ENCODE measurements at regions of chr3 and their contacts with region 1.

Region 1: DNA sequence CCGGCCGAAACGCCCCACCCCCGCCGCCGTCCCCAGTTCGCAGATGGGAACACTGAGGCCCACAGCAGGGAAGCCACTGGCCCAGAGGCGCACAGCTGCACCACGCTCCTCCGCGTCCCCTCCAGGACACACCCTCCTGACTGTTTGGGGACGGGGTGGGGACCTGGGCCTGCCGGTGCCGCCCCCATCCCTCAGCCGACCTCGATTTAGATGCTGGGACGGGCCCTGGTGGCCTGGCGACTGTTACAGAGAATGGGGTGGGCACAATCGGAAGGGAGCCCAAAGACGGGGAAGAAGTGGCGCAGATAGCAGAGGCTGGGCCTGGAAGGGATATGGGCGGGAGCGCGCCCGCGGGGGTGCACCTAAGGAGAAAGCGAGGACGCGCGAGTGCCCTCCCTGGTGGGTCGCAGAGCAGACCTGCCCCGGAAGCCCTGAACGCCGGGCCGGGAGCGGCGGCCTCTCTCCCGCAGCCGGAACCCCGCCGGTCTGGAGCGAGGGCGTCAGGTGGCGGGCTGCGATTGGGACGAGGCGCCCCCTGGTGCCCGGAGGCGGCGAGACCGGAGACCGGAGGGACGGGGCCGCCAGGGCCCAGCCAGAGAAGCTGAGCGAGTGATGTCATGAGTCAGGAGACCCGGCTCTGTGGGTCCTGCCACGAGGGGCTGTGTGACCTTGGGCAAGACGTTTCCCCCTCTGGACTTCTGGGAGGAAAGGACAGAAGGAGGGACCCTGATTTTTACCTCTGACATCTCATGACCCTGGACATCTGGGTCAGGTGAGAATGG is 78.4 kb downstream of the IQSEC1 start:
- DNase-seq: peak; percentile 71 to 94
- H3K4me3 ChIP-seq: peak overlapping the region; percentile 82 to 91
- H3K27ac ChIP-seq: peak overlapping the region; percentile 81 to 95
- H3K4me1 ChIP-seq: peaks cover 0 to 5% of the 10 kb centered on the region in 2 donors
- H3K27me3 ChIP-seq: no peaks in the 10 kb centered on the region
- CTCF ChIP-seq: peak; percentile 87 to 95 (median 89)

Region 2: DNA sequence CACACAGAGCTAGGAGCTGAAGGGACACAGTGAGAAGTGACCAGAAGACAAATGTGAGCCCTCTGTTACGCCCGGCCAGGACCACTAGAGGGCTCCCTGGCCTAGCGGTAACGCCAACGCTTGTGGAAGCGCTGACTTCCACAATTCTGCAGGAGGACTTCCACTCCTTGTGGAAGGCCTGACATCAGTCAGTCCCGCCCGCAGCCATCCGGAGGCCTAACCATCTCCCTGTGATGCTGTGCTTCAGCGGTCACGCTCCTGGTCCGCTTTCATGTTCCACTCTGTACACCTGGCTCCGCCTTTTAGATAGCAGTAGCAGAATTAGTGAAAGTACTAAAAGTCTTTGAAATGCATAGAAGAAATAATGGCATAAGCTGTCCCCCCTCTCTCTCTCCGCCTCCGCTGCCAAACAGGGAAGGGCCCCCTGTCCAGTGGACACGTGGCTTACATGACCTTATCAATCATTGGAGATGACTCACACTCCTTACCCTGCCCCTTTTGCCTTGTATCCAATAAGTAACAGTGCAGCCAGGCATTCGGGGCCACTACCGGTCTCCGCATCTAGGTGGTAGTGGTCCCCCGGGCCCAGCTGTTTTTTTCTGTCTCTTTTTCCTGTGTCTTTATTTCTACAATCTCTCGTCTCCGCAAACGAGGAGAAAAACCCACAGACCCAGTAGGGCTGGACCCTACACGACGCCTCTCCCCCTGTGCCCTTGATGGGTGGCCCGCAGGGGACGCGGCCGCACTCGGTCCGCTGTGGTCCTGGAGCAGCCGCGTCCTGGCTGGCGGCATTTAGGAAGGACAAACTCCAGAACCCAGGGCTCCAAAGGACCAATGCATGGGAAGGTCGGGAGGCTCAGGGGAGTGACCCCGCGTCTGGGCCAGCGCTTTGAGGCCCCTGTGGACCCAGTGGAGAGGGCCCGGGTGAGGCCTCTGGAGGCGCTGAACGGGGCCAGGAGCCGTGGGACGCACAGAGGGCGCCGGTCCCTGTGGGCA is 126.5 kb before region 1 on chr3:
- intact Hi-C with region 1: loop called (anchors 2 kb)
- DNase-seq: peak; percentile 53 to 94
- H3K4me3 ChIP-seq: peak overlapping the region; percentile 20 to 30
- H3K27ac ChIP-seq: no peak overlapping the region
- H3K4me1 ChIP-seq: peaks cover 3 to 15% of the 10 kb centered on the region in 2 donors
- H3K27me3 ChIP-seq: no peaks in the 10 kb centered on the region
- CTCF ChIP-seq: peak; percentile 90 to 96 (median 91)

Region 3: DNA sequence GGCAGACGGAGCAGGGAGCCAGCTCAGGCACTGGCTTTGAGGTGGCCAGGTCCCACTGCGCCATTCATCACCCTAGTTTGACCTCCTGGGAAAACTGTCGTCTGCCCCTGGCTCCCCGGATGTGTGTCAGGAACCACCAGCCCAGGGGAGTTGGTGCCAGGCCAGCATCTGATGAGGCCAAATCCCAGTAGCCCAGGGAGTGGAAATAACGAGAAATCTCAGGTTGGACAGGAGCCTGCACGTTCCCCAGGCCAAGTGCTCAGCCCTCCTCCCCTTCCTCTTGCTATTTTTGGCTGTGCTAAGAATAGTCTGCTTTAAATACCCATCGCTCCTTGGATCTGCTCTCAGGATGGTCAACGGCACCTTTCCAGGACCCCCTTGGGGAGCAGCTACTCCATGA is 60.4 kb before region 1 on chr3:
- intact Hi-C with region 1: loop called (anchors 2 kb)
- DNase-seq: peak; percentile 73 to 97
- H3K4me3 ChIP-seq: no peak overlapping the region
- H3K27ac ChIP-seq: peak overlapping the region; percentile 88 to 89
- H3K4me1 ChIP-seq: peaks cover 26 to 67% of the 10 kb centered on the region in 2 donors
- H3K27me3 ChIP-seq: no peaks in the 10 kb centered on the region
- CTCF ChIP-seq: no peak

Region 4: GRCh38 chr3:12954891-12955650 is 39.7 kb before region 1 on chr3:
- intact Hi-C with region 1: loop called (anchors 2 kb)
- DNase-seq: peak; percentile 90 to 98
- H3K4me3 ChIP-seq: peak overlapping the region; percentile 1 to 11
- H3K27ac ChIP-seq: peak overlapping the region; percentile 89 to 92
- H3K4me1 ChIP-seq: peaks cover 49 to 87% of the 10 kb centered on the region in 2 donors
- H3K27me3 ChIP-seq: no peaks in the 10 kb centered on the region
- CTCF ChIP-seq: peak in 2 of 3 experiments; percentile 4 to 23

Region 5: DNA sequence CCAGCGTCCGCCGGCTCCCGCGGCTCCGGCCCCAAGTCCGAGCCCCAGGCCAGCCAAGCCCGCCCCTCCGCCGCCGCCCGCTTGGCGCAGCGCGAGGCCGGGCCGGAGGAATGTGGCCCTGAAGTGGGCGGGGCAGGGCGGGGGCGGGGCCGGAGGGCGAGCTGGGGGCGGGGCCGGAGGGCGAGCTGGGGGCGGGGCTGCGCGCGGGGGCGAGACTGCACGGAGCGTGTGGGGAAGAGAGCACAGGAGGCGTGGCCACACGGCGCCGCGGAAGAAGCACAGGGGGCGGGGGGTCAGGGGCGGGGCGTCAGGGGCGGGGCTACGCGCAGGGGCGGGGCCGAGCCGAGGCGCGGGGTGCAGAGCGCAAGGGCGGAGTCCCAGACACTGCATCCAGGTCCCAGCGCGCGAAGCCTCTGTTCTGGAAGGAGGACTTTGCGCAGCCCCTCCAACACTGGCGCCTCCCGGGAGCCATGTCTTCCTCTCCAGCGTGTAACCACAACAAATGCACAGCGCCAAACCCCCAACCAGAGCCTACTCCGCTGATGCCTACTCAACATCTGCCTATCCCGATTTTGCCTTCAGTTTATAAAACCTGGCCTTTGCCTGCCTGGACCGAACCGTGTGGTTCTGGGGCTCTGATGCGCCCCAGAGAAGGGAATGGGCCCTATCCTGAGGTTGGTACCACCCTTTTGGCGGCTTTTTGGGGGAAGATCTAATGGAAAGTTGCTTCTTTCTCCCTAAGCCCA is 27.0 kb before region 1 on chr3:
- intact Hi-C with region 1: loop called (anchors 1 kb)
- DNase-seq: peak; percentile 63 to 93
- H3K4me3 ChIP-seq: peak overlapping the region; percentile 76 to 89
- H3K27ac ChIP-seq: peak overlapping the region; percentile 82 to 90
- H3K4me1 ChIP-seq: peaks cover 24 to 41% of the 10 kb centered on the region in 2 donors
- H3K27me3 ChIP-seq: no peaks in the 10 kb centered on the region
- CTCF ChIP-seq: no peak

Region 6: GRCh38 chr3:13022348-13023234 is 27.8 kb after region 1 on chr3:
- intact Hi-C with region 1: loop called (anchors 2 kb)
- DNase-seq: peak; percentile 75 to 93
- H3K4me3 ChIP-seq: peak overlapping the region in 1 of 2 donors; percentile 54
- H3K27ac ChIP-seq: peak overlapping the region; percentile 74 to 88
- H3K4me1 ChIP-seq: peaks cover 20 to 54% of the 10 kb centered on the region in 2 donors
- H3K27me3 ChIP-seq: no peaks in the 10 kb centered on the region
- CTCF ChIP-seq: no peak

Region 7: DNA sequence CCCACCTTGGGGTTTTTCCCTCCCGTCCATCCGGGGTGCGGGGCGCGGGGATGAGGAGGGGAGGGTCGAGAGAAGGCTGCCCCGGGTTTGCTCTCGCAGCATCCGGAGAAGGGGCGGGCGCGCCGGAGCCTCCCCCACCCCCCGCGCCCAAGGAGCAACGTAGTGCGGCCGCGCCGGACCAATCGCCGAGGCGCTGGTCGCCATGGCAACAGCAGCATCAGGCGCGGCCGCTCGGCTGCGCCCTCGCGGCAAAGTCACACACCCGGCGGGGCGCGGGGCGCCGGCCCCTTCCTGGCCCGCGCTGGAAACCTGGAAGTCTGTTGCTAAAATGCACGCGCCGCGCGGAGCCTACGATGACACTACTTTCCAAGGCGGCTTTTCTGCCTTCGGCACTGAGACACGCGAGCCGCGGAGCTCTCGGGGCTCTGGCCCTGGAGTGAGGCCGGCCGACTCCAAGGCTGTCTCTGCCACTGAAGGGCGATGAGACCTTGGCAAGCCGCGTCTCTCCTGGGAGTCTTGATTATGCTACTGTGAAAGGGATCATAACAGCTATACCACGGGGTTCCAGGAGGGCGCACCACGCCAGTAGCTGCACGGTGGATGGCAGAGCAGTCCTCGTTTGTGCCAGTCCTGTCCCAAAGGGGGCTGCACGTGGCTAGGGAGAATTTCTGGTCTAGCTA is 78.7 kb after region 1 on chr3 and contains the start of gene IQSEC1:
- intact Hi-C with region 1: loop called (anchors 2 kb)
- DNase-seq: peak; percentile 16 to 83
- H3K4me3 ChIP-seq: peak within 1 kb of the TSS; percentile 44 to 58
- H3K27ac ChIP-seq: peak within 1 kb of the TSS; percentile 11 to 16
- H3K4me1 ChIP-seq: peaks cover 14 to 30% of the 10 kb centered on the region in 2 donors
- H3K27me3 ChIP-seq: no peaks in the 10 kb centered on the region
- CTCF ChIP-seq: no peak
- total RNA-seq, gene IQSEC1: 148 TPM